Caco-2 (cell line): ENCODE measurements at regions of chr7 and their contacts with region 1.

Region 1: DNA sequence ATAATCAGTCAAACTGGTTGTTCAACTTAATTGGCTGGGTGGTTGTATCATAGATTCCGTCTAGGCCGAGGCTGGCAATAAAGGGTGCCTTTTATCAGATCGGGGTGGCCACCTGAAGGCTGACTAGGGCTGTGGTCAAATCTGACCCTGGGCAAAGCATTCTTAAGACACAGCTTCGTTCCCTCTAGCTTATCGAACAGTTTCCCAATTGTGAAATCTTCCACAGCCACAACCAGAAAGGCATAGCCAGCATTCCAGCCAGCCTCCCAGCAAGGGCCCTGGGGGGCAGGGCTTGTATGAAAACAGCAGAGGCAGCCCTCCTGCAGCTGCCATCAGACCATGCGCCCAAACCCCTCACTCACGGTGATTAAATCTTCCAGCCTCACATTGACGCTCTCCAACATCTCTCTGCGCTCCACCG is 42.5 kb upstream of the TMEM213 start:
- DNase-seq: peak; percentile 38 to 43
- H3K4me3 ChIP-seq: no peak overlapping the region
- H3K4me3 Mint-ChIP-seq: no peak overlapping the region
- H3K27ac Mint-ChIP-seq: no peak overlapping the region
- H3K4me1 ChIP-seq: peaks cover 23% of the 10 kb centered on the region
- H3K4me1 Mint-ChIP-seq: peaks cover 36% of the 10 kb centered on the region
- H3K27me3 ChIP-seq: no peaks in the 10 kb centered on the region
- H3K27me3 Mint-ChIP-seq: no peaks in the 10 kb centered on the region
- CTCF ChIP-seq: no peak

Region 2: DNA sequence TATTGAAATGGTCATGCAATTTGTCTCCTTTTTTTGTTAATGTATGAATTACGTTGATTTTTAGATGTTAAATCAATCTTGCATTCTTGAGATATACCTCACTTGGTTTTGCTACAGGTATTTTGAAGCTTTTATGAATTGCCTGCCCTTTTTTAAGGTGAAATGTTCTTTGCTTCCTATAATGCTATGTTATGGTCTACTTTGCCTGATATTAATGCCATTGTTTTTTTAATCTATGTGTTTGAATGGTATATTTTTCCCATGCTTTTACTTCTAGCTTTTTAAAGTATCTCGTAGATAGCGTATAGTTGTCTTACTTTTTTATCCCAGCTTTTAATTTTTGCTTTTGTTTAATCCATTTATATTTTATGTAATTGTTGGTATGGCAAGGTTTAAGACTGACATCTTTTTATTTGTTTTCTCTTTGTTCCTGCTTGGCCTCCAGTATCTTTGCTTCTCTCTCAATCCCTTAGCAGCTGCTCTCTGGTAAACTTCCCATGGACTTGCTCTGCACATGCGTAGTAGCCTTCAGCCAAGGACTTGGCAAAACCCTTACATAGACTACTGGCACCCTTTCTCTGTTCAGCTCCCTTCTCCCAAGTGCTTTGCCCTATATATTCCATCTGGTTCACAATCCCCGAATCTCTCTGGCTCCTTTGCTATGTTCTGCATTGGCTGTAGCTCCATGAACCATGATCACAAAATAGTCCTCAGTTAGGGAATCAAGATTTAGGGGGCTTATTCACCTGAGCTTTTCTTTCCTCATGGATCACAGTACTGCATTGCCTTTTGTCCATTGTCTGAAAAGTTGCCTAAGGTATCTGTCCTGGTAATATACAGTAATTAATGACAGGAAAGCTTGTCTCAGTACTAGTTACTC is 286.9 kb before region 1 on chr7:
- CTCF ChIA-PET with region 1: no interaction called
- POLR2A ChIA-PET with region 1: interaction called, 23 read pairs
- intact Hi-C with region 1: no loop called
- DNase-seq: no peak
- H3K4me3 ChIP-seq: no peak overlapping the region
- H3K4me3 Mint-ChIP-seq: no peak overlapping the region
- H3K27ac Mint-ChIP-seq: no peak overlapping the region
- H3K4me1 ChIP-seq: peaks cover 13% of the 10 kb centered on the region
- H3K4me1 Mint-ChIP-seq: peaks cover 11% of the 10 kb centered on the region
- H3K27me3 ChIP-seq: no peaks in the 10 kb centered on the region
- H3K27me3 Mint-ChIP-seq: no peaks in the 10 kb centered on the region
- CTCF ChIP-seq: no peak

Region 3: GRCh38 chr7:138776166-138776894 is 21.0 kb after region 1 on chr7:
- CTCF ChIA-PET with region 1: no interaction called
- POLR2A ChIA-PET with region 1: no interaction called
- intact Hi-C with region 1: loop called (anchors 2 kb)
- DNase-seq: peak; percentile 56 to 79
- H3K4me3 ChIP-seq: no peak overlapping the region
- H3K4me3 Mint-ChIP-seq: no peak overlapping the region
- H3K27ac Mint-ChIP-seq: peak overlapping the region; percentile 84
- H3K4me1 ChIP-seq: peaks cover 12% of the 10 kb centered on the region
- H3K4me1 Mint-ChIP-seq: peaks cover 6% of the 10 kb centered on the region
- H3K27me3 ChIP-seq: no peaks in the 10 kb centered on the region
- H3K27me3 Mint-ChIP-seq: no peaks in the 10 kb centered on the region
- CTCF ChIP-seq: no peak